Endothelial cell of umbilical vein (primary cell): ENCODE measurements at regions of chr2 and their contacts with region 1.

Region 1: GRCh38 chr2:46275973-46276372 is 21.2 kb upstream of the EPAS1 start:
- DNase-seq: peak; percentile 89
- H3K4me3 ChIP-seq: no peak overlapping the region
- H3K27ac ChIP-seq: peak overlapping the region; percentile 96
- H3K4me1 ChIP-seq: peaks cover 74% of the 10 kb centered on the region
- H3K27me3 ChIP-seq: no peaks in the 10 kb centered on the region
- CTCF ChIP-seq: no peak
- POLR2A ChIP-seq: no peak

Region 2: DNA sequence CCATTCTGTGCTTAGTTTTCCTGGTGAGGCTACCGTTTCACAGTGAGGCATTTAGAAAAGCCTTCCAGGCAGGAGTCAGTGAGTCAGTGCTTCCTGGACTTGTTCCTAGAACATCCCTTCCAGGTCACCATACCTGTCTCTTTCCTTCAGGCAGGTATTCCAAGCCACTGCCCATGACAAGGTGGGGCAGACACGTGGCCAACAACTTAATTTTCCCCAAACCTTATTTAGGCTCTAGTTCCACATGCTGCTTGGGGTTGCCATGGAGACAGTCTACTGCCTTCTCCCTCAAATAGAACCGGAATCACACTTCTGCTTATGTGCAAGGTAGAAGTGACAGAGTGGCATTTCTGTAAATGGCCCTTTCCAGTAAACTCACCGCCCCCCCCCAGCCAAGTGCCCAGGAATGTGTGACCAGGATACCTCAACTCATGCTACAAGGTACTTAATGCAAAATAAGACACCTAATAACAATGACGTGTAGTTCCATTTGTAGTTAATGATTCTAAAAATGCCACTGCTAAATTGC is 366.2 kb before region 1 on chr2:
- CTCF ChIA-PET with region 1: no interaction called
- POLR2A ChIA-PET with region 1: no interaction called
- dilution Hi-C with region 1: no loop called
- intact Hi-C with region 1: no loop called
- DNase-seq: no peak
- H3K4me3 ChIP-seq: no peak overlapping the region
- H3K27ac ChIP-seq: no peak overlapping the region
- H3K4me1 ChIP-seq: no peaks in the 10 kb centered on the region
- H3K27me3 ChIP-seq: no peaks in the 10 kb centered on the region
- CTCF ChIP-seq: no peak
- POLR2A ChIP-seq: no peak

Region 3: GRCh38 chr2:46067851-46068305 is 208.1 kb before region 1 on chr2:
- CTCF ChIA-PET with region 1: interaction called, 21 read pairs
- POLR2A ChIA-PET with region 1: no interaction called
- dilution Hi-C with region 1: no loop called
- intact Hi-C with region 1: loop called (anchors 1 kb)
- DNase-seq: peak; percentile 98
- H3K4me3 ChIP-seq: peak overlapping the region in 1 of 3 experiments; percentile 40
- H3K27ac ChIP-seq: peak overlapping the region; percentile 95
- H3K4me1 ChIP-seq: peaks cover 53% of the 10 kb centered on the region
- H3K27me3 ChIP-seq: no peaks in the 10 kb centered on the region
- CTCF ChIP-seq: no peak
- POLR2A ChIP-seq: no peak

Region 4: DNA sequence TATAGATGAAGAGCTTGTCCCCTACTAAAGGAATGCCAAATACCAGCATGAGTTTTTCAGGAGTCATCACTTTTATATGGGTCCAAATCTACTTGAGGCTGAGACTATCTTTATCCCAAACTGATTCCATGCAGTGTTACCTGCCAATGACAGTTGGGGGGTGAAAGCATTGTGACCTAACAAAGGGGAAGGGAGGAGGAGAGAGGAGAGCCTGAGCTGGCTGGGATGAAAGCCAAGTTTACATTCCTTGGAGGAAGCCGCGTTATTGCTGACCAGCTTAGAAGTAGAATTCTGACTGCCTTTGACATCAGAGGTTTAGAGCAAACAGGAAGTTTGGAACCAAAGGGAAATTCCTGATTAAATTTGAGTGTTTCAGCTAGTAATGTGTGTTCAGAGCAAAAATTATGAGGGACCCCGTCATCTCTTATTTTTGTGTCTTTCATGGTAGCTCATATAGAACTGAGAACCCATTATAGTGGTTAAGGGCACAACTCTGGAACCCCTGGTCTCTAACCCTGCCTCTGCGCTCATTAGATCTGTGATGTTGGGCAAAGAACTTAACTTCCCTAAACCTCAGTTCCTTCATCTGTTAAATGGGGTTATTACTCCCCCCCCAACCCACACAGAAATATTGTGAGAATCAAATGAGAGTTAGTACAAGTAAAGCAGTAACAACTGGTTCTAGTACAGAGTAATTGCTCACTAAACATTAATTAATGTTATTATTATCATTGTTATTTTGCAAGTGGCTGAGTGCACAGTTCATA is 178.1 kb before region 1 on chr2:
- CTCF ChIA-PET with region 1: interaction called, 3 read pairs
- POLR2A ChIA-PET with region 1: no interaction called
- dilution Hi-C with region 1: no loop called
- intact Hi-C with region 1: loop called (anchors 1 kb)
- DNase-seq: peak; percentile 96
- H3K4me3 ChIP-seq: no peak overlapping the region
- H3K27ac ChIP-seq: peak overlapping the region; percentile 95
- H3K4me1 ChIP-seq: peaks cover 17% of the 10 kb centered on the region
- H3K27me3 ChIP-seq: no peaks in the 10 kb centered on the region
- CTCF ChIP-seq: no peak
- POLR2A ChIP-seq: no peak

Region 5: GRCh38 chr2:46200220-46200621 is 75.8 kb before region 1 on chr2:
- CTCF ChIA-PET with region 1: interaction called, 4 read pairs
- POLR2A ChIA-PET with region 1: no interaction called
- dilution Hi-C with region 1: no loop called
- intact Hi-C with region 1: loop called (anchors 1 kb)
- DNase-seq: peak; percentile 86
- H3K4me3 ChIP-seq: no peak overlapping the region
- H3K27ac ChIP-seq: peak overlapping the region; percentile 22
- H3K4me1 ChIP-seq: peaks cover 34% of the 10 kb centered on the region
- H3K27me3 ChIP-seq: no peaks in the 10 kb centered on the region
- CTCF ChIP-seq: no peak
- POLR2A ChIP-seq: no peak

Region 6: GRCh38 chr2:46241344-46241743 is 34.6 kb before region 1 on chr2:
- CTCF ChIA-PET with region 1: no interaction called
- POLR2A ChIA-PET with region 1: no interaction called
- dilution Hi-C with region 1: no loop called
- intact Hi-C with region 1: loop called (anchors 1 kb)
- DNase-seq: peak; percentile 55
- H3K4me3 ChIP-seq: no peak overlapping the region
- H3K27ac ChIP-seq: no peak overlapping the region
- H3K4me1 ChIP-seq: peaks cover 9% of the 10 kb centered on the region
- H3K27me3 ChIP-seq: no peaks in the 10 kb centered on the region
- CTCF ChIP-seq: no peak
- POLR2A ChIP-seq: no peak

Region 7: DNA sequence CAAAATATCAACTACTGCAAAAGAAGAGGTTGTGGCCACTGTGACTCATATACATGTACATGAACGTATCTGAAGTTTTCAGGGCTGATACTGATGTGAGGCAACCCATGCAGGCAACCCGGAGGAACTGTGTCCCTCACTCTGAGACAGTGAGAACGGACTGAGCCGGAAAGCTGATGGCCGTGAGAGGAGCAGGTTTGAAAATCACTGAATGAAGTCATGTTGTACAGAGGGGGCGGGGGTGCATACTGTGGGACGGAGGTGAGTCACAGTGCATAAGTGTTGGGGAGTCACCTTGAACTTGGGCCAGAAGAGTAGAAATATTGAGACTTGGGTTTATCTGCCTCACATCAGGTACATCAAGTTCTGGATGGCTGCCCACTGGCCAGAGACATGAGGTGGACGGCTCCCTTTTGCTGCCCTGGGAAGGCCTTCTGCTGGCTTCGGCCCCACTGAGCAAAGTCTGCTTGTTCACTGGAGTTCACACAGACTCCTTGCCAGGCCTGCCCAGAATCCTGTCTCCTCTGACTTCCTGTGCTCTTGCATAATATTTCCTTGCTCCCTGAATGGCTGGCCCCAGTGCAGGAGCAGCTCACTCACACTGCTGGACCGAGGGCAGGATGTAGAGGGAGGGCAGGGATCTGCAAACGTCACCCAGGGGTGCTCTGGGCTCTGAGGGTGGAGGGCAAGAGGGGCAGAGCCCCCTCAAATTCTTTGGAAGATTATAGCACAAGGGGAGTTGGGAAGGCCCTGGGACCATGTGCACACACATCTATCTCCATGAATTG is 39.3 kb after region 1 on chr2:
- CTCF ChIA-PET with region 1: no interaction called
- POLR2A ChIA-PET with region 1: no interaction called
- dilution Hi-C with region 1: no loop called
- intact Hi-C with region 1: loop called (anchors 1 kb)
- DNase-seq: peak; percentile 97
- H3K4me3 ChIP-seq: no peak overlapping the region
- H3K27ac ChIP-seq: peak overlapping the region; percentile 80
- H3K4me1 ChIP-seq: peaks cover 44% of the 10 kb centered on the region
- H3K27me3 ChIP-seq: no peaks in the 10 kb centered on the region
- CTCF ChIP-seq: no peak
- POLR2A ChIP-seq: peak; percentile 69

Region 8: DNA sequence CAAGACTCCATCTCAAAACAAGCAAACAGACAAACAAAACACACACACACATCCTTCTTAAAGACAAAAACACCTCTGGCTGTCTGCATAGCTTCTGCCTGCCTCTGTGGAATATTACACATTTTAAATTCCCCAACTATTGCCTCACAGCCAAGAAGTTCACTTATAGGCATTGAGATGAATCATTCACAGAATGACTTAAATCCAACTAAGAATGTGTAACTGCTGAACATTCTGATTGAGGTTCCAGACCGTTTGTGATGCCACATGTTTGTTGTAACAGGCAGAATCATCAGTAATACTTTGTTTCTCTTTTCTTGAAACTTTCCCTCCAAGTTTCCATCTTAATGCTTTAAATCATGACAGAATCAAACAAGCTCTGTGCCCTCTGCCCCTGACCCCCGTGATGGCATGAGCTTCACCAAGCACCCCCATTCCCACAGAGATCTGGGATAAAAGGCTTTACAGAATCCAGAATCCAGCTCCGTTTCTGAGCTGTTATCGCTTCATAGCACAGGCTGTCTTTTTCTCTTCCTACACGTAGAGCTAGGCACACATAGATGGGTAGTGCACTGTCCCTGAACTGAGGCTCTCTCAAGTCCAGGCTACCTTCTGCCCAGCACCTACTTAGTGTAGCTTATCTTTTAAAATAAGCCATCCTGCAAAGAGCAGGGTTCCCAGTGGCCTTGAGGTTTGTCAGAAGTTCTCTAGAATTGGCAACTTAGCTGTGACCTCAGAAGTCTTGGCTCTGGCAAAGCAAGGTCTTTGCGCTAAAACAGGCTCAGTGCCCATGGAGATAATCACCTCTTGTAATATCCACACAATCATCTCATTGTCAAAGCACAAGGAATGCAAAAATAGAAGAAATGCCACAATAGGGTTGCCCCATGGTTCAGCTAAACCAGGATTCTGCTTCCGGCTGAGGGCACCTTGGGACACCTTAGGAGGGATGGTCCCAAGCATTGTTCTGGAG is 54.1 kb after region 1 on chr2:
- CTCF ChIA-PET with region 1: no interaction called
- POLR2A ChIA-PET with region 1: no interaction called
- dilution Hi-C with region 1: no loop called
- intact Hi-C with region 1: no loop called
- DNase-seq: no peak
- H3K4me3 ChIP-seq: no peak overlapping the region
- H3K27ac ChIP-seq: no peak overlapping the region
- H3K4me1 ChIP-seq: peaks cover 42% of the 10 kb centered on the region
- H3K27me3 ChIP-seq: no peaks in the 10 kb centered on the region
- CTCF ChIP-seq: no peak
- POLR2A ChIP-seq: no peak